Heart right ventricle (tissue), 16 donors: ENCODE measurements at regions of chr16 and their contacts with region 1.

Region 1: DNA sequence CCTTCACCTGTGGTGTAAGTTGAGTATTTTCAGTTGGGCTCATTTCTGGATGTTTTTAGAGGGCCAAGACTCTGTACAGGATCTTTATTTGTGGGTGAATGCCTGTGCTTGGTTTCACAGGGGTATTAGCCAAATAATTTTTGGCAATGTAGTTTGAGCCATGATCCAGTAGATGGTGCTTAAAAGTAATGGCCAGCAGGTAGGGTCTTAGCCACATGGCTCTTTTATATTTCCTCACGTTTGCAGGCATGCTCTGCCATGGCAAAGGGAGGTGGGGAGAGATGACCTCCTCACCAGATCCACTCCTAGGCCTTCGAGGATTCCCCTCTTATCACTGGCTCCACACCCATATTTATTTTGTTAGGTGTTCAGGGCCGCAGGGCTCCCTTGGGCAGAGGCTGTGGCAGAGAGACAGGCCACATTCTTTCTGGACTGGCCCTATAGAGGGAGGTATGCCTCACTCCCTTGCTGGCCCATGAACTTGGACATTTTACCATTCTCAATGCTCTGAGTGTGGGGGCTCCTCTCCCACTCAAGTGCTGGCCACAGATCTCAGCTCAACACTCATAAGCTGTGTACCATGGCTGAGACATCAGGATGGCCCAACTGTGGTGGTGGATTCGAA is 417.1 kb downstream of the XYLT1 start:
- DNase-seq: no peak
- ATAC-seq: no peak
- H3K4me3 ChIP-seq: no peak overlapping the region
- H3K27ac ChIP-seq: no peak overlapping the region
- H3K4me1 ChIP-seq: no peaks in the 10 kb centered on the region
- H3K27me3 ChIP-seq: peaks cover 0 to under 1% (median 0%) of the 10 kb centered on the region in 7 donors
- CTCF ChIP-seq: no peak

Region 2: GRCh38 chr16:17117906-17118562 is 64.4 kb after region 1 on chr16:
- intact Hi-C with region 1: loop called in 1 of 10 experiments (anchors 10 kb)
- DNase-seq: no peak
- ATAC-seq: no peak
- H3K4me3 ChIP-seq: no peak overlapping the region
- H3K27ac ChIP-seq: no peak overlapping the region
- H3K4me1 ChIP-seq: no peaks in the 10 kb centered on the region
- H3K27me3 ChIP-seq: no peaks in the 10 kb centered on the region
- CTCF ChIP-seq: no peak

Region 3: DNA sequence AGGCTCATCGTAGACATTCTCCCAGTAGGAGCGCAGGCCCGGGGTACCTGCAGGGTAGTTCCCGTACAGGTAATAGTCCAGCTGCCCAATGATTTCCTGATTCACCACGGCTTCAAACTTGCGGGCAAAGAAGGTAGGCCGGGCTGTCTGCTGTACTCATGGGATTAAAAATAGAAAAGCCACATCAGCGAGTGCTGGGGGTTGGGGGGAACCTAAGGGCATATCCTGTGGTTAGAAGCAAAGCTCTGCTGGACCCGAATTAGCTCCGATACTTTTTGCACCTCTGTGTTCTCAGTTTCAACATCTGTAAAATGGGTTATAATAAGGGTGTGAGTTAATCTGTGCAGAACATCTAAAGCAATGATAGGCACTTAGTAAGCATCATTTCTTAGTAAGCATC is 80.9 kb after region 1 on chr16:
- intact Hi-C with region 1: no loop called
- DNase-seq: no peak
- ATAC-seq: no peak
- H3K4me3 ChIP-seq: no peak overlapping the region
- H3K27ac ChIP-seq: no peak overlapping the region
- H3K4me1 ChIP-seq: no peaks in the 10 kb centered on the region
- H3K27me3 ChIP-seq: no peaks in the 10 kb centered on the region
- CTCF ChIP-seq: no peak